CD4-positive, alpha-beta memory T cell (primary cell): ENCODE measurements at regions of chr22 and their contacts with region 1.

Region 1: GRCh38 chr22:40922484-40923303 is 28.5 kb upstream of the RBX1 start:
- DNase-seq: peak in 4 of 5 donors; percentile 63 to 72 (median 66)
- H3K4me3 ChIP-seq: no peak overlapping the region
- H3K4me3 Mint-ChIP-seq: peak overlapping the region; percentile 22 to 64 (median 44)
- H3K27ac ChIP-seq: no peak overlapping the region
- H3K27ac Mint-ChIP-seq: peak overlapping the region in 6 of 7 donors; percentile 48 to 84 (median 74)
- H3K4me1 ChIP-seq: peaks cover 4% of the 10 kb centered on the region
- H3K4me1 Mint-ChIP-seq: peaks cover 4 to 6% (median 5%) of the 10 kb centered on the region in 4 donors
- H3K27me3 ChIP-seq: no peaks in the 10 kb centered on the region
- H3K27me3 Mint-ChIP-seq: no peaks in the 10 kb centered on the region

Region 2: DNA sequence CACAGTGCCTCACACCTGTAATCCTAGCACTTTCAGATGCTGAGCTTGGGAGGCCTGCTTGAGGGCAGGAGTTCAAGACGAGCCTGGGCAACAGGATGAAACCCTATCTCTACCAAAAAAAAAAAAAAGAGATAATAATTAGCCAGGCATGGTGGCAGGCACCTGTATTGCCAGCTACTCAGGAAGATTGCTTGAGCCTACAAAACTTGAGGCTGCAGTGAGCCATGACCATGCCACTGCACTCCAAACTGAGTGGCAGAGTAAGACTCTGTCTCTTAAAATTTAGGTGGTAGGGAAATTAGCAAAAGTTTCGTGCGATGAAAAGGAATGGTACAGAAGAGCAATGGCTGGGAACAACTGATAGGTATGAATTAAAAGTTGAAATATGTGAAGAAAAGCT is 84.2 kb before region 1 on chr22:
- CTCF ChIA-PET with region 1: no interaction called
- POLR2A ChIA-PET with region 1: no interaction called
- intact Hi-C with region 1: no loop called
- DNase-seq: no peak
- H3K4me3 ChIP-seq: no peak overlapping the region
- H3K4me3 Mint-ChIP-seq: no peak overlapping the region
- H3K27ac ChIP-seq: no peak overlapping the region
- H3K27ac Mint-ChIP-seq: no peak overlapping the region
- H3K4me1 ChIP-seq: no peaks in the 10 kb centered on the region
- H3K4me1 Mint-ChIP-seq: peaks cover 0 to 12% (median 6%) of the 10 kb centered on the region in 4 donors
- H3K27me3 ChIP-seq: no peaks in the 10 kb centered on the region
- H3K27me3 Mint-ChIP-seq: no peaks in the 10 kb centered on the region

Region 3: DNA sequence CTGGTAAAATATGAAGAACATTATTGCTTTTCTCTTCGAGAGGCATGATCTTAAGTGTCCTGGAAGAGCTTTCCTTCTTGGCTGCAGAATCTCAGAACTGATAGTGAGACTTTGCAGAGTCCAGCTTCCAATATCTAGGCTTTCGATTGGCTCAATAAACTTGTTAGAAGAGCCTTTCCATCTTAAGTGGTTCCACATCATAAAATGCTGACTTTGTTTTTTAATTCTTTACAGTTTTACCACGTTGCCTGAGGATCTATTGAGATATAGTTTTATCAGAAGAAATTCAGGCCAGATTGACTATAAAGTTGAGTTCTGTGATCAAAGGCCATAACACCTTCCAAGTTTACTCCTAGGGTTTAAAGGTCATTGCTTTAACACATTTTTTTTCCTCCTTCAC is 45.2 kb before region 1 on chr22:
- CTCF ChIA-PET with region 1: no interaction called
- POLR2A ChIA-PET with region 1: no interaction called
- intact Hi-C with region 1: no loop called
- DNase-seq: no peak
- H3K4me3 ChIP-seq: no peak overlapping the region
- H3K4me3 Mint-ChIP-seq: no peak overlapping the region
- H3K27ac ChIP-seq: no peak overlapping the region
- H3K27ac Mint-ChIP-seq: peak overlapping the region in 1 of 7 donors; percentile 8
- H3K4me1 ChIP-seq: no peaks in the 10 kb centered on the region
- H3K4me1 Mint-ChIP-seq: no peaks in the 10 kb centered on the region
- H3K27me3 ChIP-seq: no peaks in the 10 kb centered on the region
- H3K27me3 Mint-ChIP-seq: no peaks in the 10 kb centered on the region

Region 4: GRCh38 chr22:40911772-40912171 is 10.9 kb before region 1 on chr22:
- CTCF ChIA-PET with region 1: interaction called, 26 read pairs
- POLR2A ChIA-PET with region 1: no interaction called
- intact Hi-C with region 1: no loop called
- DNase-seq: no peak
- H3K4me3 ChIP-seq: no peak overlapping the region
- H3K4me3 Mint-ChIP-seq: no peak overlapping the region
- H3K27ac ChIP-seq: no peak overlapping the region
- H3K27ac Mint-ChIP-seq: no peak overlapping the region
- H3K4me1 ChIP-seq: no peaks in the 10 kb centered on the region
- H3K4me1 Mint-ChIP-seq: peaks cover 0 to 1% (median 0%) of the 10 kb centered on the region in 4 donors
- H3K27me3 ChIP-seq: no peaks in the 10 kb centered on the region
- H3K27me3 Mint-ChIP-seq: no peaks in the 10 kb centered on the region

Region 5: DNA sequence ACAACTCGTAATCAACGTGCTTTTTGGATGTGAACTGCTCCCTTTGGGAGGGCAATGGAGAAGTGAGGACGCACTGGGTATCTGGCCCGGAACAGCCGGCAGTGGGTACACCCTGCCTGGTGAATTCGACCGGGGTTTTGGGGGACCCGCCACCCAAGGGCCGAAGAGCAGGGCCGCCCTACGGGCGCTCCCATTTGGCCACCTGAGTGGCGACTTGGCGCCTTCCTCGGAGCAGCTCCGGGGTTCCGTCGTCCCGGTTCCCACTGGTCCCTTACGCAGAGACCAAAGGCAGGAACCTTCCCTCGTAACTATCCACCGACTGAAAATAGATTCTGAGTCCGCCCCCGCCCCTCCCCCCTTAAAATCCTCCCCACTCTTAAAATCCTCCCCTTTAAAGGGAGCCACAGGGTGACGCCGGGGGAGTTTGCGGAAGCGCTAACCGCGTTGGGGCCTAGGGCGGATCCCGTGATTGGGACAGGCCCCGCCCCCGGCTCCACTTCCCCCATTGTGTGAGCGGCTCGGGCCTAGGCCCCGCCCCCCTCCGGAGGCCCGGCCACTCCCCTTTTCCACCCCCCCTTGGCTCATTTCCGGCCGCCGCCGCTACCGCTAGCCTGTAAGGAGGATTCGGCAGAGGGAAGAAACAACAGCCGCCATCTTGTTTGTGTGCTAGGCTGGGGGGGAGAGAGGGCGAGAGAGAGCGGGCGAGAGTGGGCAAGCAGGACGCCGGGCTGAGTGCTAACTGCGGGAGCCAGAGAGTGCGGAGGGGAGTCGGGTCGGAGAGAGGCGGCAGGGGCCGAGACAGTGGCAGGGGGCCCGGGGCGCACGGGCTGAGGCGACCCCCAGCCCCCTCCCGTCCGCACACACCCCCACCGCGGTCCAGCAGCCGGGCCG is 168.7 kb after region 1 on chr22:
- CTCF ChIA-PET with region 1: interaction called, 8 read pairs
- POLR2A ChIA-PET with region 1: interaction called, 16 read pairs
- intact Hi-C with region 1: loop called (anchors 1 kb)
- DNase-seq: peak; percentile 98 to 99 (median 99)
- H3K4me3 ChIP-seq: peak overlapping the region; percentile 79 to 93
- H3K4me3 Mint-ChIP-seq: peak overlapping the region; percentile 93 to 100 (median 98)
- H3K27ac ChIP-seq: peak overlapping the region; percentile 99
- H3K27ac Mint-ChIP-seq: peak overlapping the region; percentile 97 to 100 (median 99)
- H3K4me1 ChIP-seq: peaks cover 27% of the 10 kb centered on the region
- H3K4me1 Mint-ChIP-seq: peaks cover 20 to 44% (median 27%) of the 10 kb centered on the region in 4 donors
- H3K27me3 ChIP-seq: no peaks in the 10 kb centered on the region
- H3K27me3 Mint-ChIP-seq: no peaks in the 10 kb centered on the region

Region 6: GRCh38 chr22:41132550-41132949 is 209.9 kb after region 1 on chr22:
- CTCF ChIA-PET with region 1: interaction called, 15 read pairs
- POLR2A ChIA-PET with region 1: no interaction called
- intact Hi-C with region 1: no loop called
- DNase-seq: no peak
- H3K4me3 ChIP-seq: no peak overlapping the region
- H3K4me3 Mint-ChIP-seq: no peak overlapping the region
- H3K27ac ChIP-seq: no peak overlapping the region
- H3K27ac Mint-ChIP-seq: peak overlapping the region in 3 of 7 donors; percentile 32 to 75 (median 42)
- H3K4me1 ChIP-seq: no peaks in the 10 kb centered on the region
- H3K4me1 Mint-ChIP-seq: peaks cover 0 to 9% (median 6%) of the 10 kb centered on the region in 4 donors
- H3K27me3 ChIP-seq: no peaks in the 10 kb centered on the region
- H3K27me3 Mint-ChIP-seq: no peaks in the 10 kb centered on the region

Region 7: DNA sequence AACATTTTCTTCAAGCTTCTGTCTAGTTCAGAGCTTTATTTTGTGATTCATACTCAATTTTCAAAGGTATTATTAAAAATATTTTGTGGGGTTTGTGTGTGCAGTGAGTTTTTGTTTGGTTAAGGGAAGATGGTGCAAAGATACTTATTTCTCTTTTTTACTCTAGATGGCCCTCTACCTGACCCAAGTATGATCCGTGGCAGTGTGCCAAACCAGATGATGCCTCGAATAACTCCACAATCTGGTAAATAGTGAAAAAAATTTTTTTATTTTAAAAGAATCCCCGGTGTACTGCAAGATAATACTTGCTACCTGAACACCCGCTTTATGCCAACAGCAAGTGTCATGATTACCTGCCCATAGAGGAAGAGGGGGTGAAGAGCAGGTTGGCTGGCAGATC is 223.9 kb after region 1 on chr22:
- CTCF ChIA-PET with region 1: interaction called, 13 read pairs
- POLR2A ChIA-PET with region 1: no interaction called
- intact Hi-C with region 1: no loop called
- DNase-seq: no peak
- H3K4me3 ChIP-seq: no peak overlapping the region
- H3K4me3 Mint-ChIP-seq: no peak overlapping the region
- H3K27ac ChIP-seq: no peak overlapping the region
- H3K27ac Mint-ChIP-seq: no peak overlapping the region
- H3K4me1 ChIP-seq: no peaks in the 10 kb centered on the region
- H3K4me1 Mint-ChIP-seq: peaks cover 0 to 2% (median under 1%) of the 10 kb centered on the region in 4 donors
- H3K27me3 ChIP-seq: no peaks in the 10 kb centered on the region
- H3K27me3 Mint-ChIP-seq: no peaks in the 10 kb centered on the region

Region 8: DNA sequence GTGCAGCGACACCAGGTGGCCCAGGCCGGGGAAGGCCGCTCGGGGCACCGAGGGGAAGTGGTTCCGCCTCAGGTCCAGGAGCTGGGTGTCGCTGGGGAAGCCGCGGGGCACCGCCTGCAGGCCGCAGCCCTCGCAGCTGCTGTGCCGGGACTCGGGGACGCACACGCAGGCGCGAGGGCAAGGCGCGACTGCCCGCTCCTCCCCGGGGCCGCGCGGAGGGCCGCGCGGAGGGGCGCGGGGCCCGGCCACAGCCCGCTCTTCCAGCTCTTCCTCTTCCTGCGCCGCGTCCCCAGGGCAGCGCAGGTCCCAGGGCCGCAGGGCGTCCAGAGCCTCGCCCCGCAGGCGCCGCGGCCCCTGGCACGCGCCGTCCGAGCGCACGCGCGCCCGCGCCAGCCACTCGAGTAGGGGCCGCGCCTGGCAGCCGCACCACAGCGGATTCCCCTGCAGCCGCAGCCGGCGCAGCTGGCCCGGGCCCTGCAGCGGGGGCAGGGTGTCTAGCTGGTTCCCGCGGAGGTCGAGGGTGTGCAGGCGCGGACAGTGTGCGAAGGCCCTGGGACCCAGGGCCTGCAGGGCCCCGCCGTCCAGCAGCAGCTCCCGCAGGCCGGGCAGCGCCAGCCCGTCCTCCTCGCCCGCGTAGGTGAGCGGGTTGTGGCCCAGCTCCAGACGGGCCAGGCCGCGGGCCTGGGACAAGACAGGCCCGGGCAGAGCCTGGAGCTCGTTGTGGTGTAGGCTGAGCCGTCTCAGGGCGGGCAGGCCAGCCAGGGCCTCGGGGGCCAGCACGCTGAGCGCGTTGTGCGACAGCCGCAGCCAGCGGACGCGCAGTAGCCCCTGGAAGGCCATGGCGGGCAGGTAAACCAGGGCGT is 315.2 kb after region 1 on chr22:
- CTCF ChIA-PET with region 1: interaction called, 133 read pairs
- POLR2A ChIA-PET with region 1: interaction called, 25 read pairs
- intact Hi-C with region 1: loop called (anchors 1 kb)
- DNase-seq: peak; percentile 81 to 84 (median 82)
- H3K4me3 ChIP-seq: peak overlapping the region in 1 of 2 donors; percentile 12
- H3K4me3 Mint-ChIP-seq: peak overlapping the region in 6 of 8 donors; percentile 15 to 82 (median 67)
- H3K27ac ChIP-seq: no peak overlapping the region
- H3K27ac Mint-ChIP-seq: peak overlapping the region in 1 of 7 donors; percentile 70
- H3K4me1 ChIP-seq: peaks cover 13% of the 10 kb centered on the region
- H3K4me1 Mint-ChIP-seq: peaks cover 4 to 14% (median 6%) of the 10 kb centered on the region in 4 donors
- H3K27me3 ChIP-seq: no peaks in the 10 kb centered on the region
- H3K27me3 Mint-ChIP-seq: no peaks in the 10 kb centered on the region